ENCODE measurements at regions of chr6 and their contacts with region 1.

Region 1: DNA sequence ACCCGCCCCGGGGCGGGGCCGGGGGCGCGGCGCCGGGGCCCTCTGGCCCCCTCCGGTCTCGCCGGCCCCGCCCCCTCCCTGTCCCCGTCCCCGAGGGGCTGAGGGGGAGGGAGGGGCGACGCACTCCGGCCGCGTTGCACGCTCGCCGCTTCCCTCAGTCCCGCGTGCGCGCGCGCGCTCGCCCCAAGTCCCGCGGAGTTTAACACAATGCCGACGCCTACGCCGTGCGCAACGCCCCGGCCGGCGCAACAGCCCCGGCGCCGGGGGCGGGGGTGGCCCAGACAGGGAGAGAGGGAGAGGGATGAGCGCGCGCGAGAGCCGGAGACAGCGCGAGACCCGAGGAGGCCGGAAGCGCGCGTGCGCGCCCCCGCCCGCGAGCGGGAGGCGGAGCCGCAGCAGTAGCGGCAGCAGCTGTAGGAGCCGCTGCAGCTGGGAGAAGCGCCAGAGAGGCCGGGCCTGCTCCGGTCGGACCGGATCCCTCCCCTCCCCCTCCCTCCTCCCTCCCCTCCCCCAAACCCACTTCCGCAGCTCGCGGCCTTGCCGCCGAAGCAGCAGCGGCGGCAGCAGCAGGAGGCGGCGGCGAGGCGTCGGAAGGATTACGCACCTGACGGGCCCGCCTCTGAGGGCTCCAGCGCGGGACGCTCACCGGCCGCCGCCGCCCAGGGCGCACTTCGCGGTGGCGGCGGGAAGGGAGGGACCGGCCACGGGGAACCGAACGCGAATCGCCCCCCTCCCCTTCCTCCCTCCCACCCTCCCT is 905 bp downstream of the ZBTB2 start:
- DNase-seq: peak; percentile 99
- ATAC-seq: peak; percentile 79
- H3K4me3 Mint-ChIP-seq: peak overlapping the region; percentile 92
- H3K27ac Mint-ChIP-seq: peak overlapping the region; percentile 31
- H3K4me1 Mint-ChIP-seq: peaks cover 51% of the 10 kb centered on the region
- H3K27me3 Mint-ChIP-seq: no peaks in the 10 kb centered on the region

Region 2: GRCh38 chr6:149746147-149746946 is 1644.1 kb before region 1 on chr6 and contains the start of gene NUP43:
- CTCF ChIA-PET with region 1: no interaction called
- POLR2A ChIA-PET with region 1: no interaction called
- intact Hi-C with region 1: loop called in 1 of 2 experiments (anchors 2 kb)
- DNase-seq: peak; percentile 96
- ATAC-seq: peak; percentile 67
- H3K4me3 Mint-ChIP-seq: peak within 1 kb of the TSS; percentile 98
- H3K27ac Mint-ChIP-seq: peak within 1 kb of the TSS; percentile 96
- H3K4me1 Mint-ChIP-seq: peaks cover 27% of the 10 kb centered on the region
- H3K27me3 Mint-ChIP-seq: no peaks in the 10 kb centered on the region
- total RNA-seq, gene NUP43: 80.5 to 89.4 TPM

Region 3: GRCh38 chr6:151370509-151371078 is 19.9 kb before region 1 on chr6:
- CTCF ChIA-PET with region 1: interaction called, 5 read pairs
- POLR2A ChIA-PET with region 1: no interaction called
- intact Hi-C with region 1: loop called (anchors 1 kb)
- DNase-seq: no peak
- ATAC-seq: no peak
- H3K4me3 Mint-ChIP-seq: no peak overlapping the region
- H3K27ac Mint-ChIP-seq: no peak overlapping the region
- H3K4me1 Mint-ChIP-seq: peaks cover 39% of the 10 kb centered on the region
- H3K27me3 Mint-ChIP-seq: no peaks in the 10 kb centered on the region

Region 4: DNA sequence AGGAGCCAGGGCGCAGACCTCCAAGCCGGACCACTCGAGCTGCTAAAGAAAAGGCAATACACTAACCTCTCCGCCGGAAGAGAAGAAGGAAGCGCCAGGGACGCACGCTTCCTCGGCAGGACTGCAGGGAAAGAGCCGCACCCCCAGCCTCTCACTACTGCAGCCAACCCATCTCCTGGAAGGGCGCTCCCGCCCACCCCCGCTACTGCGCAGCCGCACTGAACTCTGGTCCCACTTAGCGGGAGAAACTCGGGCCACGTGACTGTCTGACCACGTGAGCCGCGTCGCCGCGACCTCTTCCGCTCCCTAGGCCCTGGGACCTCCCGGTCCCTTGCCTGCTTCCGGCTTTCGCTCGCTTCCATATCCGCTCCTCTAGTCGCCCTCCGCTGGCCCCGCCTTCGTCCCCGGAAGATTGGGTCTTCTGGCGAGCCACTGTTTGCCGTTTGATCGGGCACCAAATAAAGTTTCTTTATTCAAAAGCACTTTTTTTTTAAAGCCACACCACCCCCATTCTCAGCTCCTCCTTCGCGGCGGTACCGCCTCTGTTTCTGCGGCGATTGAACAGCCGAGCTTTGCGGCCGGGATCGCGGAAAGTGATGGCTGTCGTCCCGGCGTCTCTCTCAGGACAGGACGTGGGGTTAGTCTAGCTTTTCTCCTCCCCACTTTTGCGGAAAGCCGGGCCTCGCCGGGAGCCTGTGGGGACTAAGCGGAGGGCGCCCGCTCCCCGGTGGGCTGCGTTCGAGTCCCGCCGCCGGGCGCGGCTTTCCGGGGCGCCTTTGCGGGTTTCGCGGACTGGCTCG is 61.7 kb after region 1 on chr6 and contains the start of gene RMND1:
- CTCF ChIA-PET with region 1: interaction called, 4 read pairs
- POLR2A ChIA-PET with region 1: interaction called, 22 read pairs
- intact Hi-C with region 1: loop called (anchors 1 kb)
- DNase-seq: peak; percentile 100
- ATAC-seq: peak; percentile 98
- H3K4me3 Mint-ChIP-seq: peak within 1 kb of the TSS; percentile 96
- H3K27ac Mint-ChIP-seq: peak within 1 kb of the TSS; percentile 85
- H3K4me1 Mint-ChIP-seq: peaks cover 30% of the 10 kb centered on the region
- H3K27me3 Mint-ChIP-seq: no peaks in the 10 kb centered on the region
- total RNA-seq, gene RMND1: 20.8 to 21.5 TPM

Region 5: GRCh38 chr6:152982768-152983636 is 1592.5 kb after region 1 on chr6 and contains the start of gene FBXO5:
- CTCF ChIA-PET with region 1: no interaction called
- POLR2A ChIA-PET with region 1: no interaction called
- intact Hi-C with region 1: loop called (anchors 1 to 2 kb)
- DNase-seq: peak; percentile 98
- ATAC-seq: peak; percentile 89
- H3K4me3 Mint-ChIP-seq: peak within 1 kb of the TSS; percentile 90
- H3K27ac Mint-ChIP-seq: peak within 1 kb of the TSS; percentile 100
- H3K4me1 Mint-ChIP-seq: peaks cover 34% of the 10 kb centered on the region
- H3K27me3 Mint-ChIP-seq: no peaks in the 10 kb centered on the region
- total RNA-seq, gene FBXO5: 48.7 to 57.3 TPM

Measured in activated CD4-positive, alpha-beta T cell treated with anti-CD3 and anti-CD28 coated beads for 36 hours (primary cell).